HepG2 (cell line): ENCODE measurements at regions of chr7 and their contacts with region 1.

Region 1: DNA sequence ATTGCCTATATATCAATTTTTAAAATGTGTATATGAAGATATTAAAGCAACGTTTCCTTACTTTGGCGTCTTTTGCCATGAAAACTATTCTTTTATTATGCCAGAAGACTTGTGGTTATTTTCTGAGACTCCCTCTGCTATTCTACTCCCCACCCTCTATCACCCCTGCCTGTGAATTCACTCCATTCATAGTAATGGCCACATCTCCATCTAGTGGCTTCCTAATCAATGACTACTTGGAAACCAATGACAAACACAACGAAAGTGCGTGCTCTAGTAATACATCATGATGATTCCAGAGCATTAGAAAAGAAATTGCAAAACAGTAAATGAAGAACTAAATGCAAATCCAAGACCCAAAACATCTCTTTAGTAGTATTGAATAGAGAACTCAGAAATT is 186.7 kb upstream of the HGF start:
- DNase-seq: peak; percentile 39
- ATAC-seq: peak; percentile 94
- H3K4me3 ChIP-seq: no peak overlapping the region
- H3K27ac ChIP-seq: no peak overlapping the region
- H3K4me1 ChIP-seq: no peaks in the 10 kb centered on the region
- H3K27me3 ChIP-seq: no peaks in the 10 kb centered on the region
- CTCF ChIP-seq: peak; percentile 74
- EP300 ChIP-seq: no peak
- POLR2A ChIP-seq: no peak
- RAD21 ChIP-seq: peak; percentile 57; the same call in 1 of the 2 replicates

Region 2: DNA sequence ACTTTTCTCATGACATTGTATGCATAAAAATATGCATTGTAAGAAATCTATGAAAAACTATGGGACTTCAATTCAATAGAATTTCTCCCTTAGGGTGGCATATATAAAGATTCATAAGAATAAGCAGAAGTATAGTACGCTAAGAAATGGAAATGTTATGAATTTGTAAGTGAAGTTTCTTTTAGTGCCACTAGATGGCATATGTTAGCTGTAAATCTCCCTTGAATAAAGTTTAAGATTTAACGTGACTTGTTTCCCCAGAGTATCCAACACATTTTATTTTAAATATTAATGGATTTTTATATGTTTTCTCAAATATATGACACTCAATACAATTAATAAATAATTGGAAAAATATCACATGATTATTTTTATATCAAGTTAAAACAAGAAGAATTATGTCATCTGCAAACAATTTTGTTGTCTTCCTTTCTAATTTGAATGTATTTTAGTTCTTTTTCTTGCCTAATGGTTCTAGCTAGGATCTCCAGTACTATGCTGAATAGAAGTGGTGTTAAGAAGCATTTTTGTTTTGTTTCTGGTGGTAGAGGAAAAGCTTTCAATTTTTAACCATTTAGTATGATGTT is 473.8 kb before region 1 on chr7:
- CTCF ChIA-PET with region 1: interaction called, 10 read pairs
- POLR2A ChIA-PET with region 1: no interaction called
- in situ Hi-C with region 1: no loop called
- intact Hi-C with region 1: loop called (anchors 5 kb)
- DNase-seq: peak; percentile 4
- ATAC-seq: no peak
- H3K4me3 ChIP-seq: no peak overlapping the region
- H3K27ac ChIP-seq: no peak overlapping the region
- H3K4me1 ChIP-seq: peaks cover 14% of the 10 kb centered on the region
- H3K27me3 ChIP-seq: no peaks in the 10 kb centered on the region
- CTCF ChIP-seq: peak; percentile 47
- EP300 ChIP-seq: no peak
- POLR2A ChIP-seq: no peak
- RAD21 ChIP-seq: no peak

Region 3: DNA sequence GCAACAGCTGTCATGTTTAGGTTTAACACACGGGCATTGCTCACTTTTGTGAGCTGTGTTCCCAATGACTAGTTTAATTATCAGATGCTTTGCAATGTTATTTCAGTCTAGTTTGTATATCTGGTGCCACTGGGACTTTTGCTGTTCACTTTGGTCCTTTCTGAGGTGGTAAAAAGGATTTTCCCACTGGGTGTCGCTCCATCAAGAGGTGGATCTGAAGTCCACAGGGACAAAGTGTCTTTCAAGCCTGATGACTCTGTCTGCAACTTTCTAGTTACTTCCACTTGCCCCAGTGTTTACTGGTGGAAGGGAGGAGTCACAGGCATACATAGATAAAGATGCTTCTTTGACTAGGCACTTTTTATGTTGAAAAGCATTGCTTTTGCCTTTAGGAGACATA is 428.9 kb before region 1 on chr7:
- CTCF ChIA-PET with region 1: interaction called, 3 read pairs
- POLR2A ChIA-PET with region 1: no interaction called
- in situ Hi-C with region 1: no loop called
- intact Hi-C with region 1: loop called (anchors 1 kb)
- DNase-seq: peak; percentile 7
- ATAC-seq: peak; percentile 71
- H3K4me3 ChIP-seq: no peak overlapping the region
- H3K27ac ChIP-seq: no peak overlapping the region
- H3K4me1 ChIP-seq: no peaks in the 10 kb centered on the region
- H3K27me3 ChIP-seq: no peaks in the 10 kb centered on the region
- CTCF ChIP-seq: peak; percentile 35; the same call in 1 of the 2 replicates
- EP300 ChIP-seq: no peak
- POLR2A ChIP-seq: no peak
- RAD21 ChIP-seq: no peak

Region 4: DNA sequence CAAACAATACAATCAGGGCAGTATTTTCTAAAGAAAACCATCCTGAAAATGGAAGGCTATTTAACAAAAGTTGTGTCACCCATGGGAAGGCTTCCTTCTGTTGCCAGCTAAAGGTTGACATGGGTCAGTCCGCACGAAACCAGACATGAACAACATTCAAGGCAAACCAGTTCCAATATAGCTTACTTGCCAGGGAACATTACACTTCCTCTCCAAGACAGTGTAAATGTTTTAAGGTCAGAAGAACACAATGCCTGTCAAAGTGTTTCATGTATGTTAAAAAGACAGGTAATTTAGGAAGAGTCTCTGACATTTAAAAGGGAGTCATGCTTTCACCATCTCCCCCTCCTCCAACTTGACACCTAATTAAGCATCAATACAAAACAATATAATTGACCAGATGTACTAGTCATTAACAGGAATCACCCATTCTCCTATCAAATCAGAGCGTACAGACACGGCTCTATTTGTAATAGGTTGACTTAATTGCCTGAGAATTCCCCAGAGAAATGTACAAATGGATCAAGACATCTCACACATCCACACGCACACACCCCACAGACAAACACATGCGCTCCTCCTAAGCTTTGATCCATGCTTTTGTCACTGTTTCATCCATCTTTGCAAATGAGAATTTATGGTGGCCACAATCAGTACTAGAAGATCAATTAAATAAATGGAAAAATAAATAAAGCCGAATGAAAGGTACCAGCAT is 417.6 kb after region 1 on chr7:
- CTCF ChIA-PET with region 1: no interaction called
- POLR2A ChIA-PET with region 1: no interaction called
- in situ Hi-C with region 1: no loop called
- intact Hi-C with region 1: no loop called
- DNase-seq: no peak
- ATAC-seq: no peak
- H3K4me3 ChIP-seq: no peak overlapping the region
- H3K27ac ChIP-seq: no peak overlapping the region
- H3K4me1 ChIP-seq: no peaks in the 10 kb centered on the region
- H3K27me3 ChIP-seq: no peaks in the 10 kb centered on the region
- CTCF ChIP-seq: no peak
- EP300 ChIP-seq: no peak
- POLR2A ChIP-seq: no peak
- RAD21 ChIP-seq: no peak